Activated CD4-positive, alpha-beta memory T cell treated with anti-CD3 and anti-CD28 coated beads for 36 hours (primary cell): ENCODE measurements at regions of chr5 and their contacts with region 1.

Region 1: DNA sequence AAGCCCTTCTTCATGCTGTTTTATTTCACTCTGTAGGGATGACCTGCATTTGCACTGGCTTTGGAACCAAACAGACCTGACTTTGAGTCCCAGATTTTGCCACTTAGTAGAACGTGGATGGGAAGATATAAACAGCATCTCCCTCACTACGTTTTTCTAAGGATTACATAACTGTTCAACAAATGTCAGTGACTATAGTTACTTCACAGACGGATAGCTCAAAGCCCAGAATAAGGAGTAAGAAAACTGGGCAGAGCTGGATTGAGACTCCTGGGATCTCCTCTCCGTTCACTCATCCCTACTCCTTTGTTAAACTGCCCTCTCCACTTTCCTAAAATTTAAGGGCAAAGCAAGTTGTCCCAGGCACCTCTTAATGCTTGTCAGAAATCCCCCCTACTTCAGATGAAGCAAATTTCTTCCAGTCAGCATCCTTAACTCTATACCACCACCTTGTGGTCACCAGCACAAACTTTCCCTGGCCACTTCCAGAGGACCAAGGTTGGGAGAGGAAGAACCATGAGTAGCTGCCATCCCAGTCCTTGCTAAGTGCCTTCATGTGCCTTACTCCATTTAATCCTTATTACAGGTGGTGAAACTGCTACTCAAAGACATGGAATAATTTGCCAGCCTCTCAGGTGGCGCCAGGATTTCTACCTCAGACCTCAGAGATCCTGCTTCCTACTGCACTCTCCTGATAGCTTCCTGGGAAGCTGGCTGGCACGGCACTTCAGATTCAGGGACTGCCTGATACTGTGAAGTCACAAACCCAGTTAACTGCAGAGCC is 38.4 kb downstream of the EGR1 start:
- DNase-seq: peak; percentile 39
- H3K4me3 Mint-ChIP-seq: no peak overlapping the region
- H3K27ac Mint-ChIP-seq: no peak overlapping the region
- H3K4me1 Mint-ChIP-seq: no peaks in the 10 kb centered on the region
- H3K27me3 Mint-ChIP-seq: no peaks in the 10 kb centered on the region

Region 2: DNA sequence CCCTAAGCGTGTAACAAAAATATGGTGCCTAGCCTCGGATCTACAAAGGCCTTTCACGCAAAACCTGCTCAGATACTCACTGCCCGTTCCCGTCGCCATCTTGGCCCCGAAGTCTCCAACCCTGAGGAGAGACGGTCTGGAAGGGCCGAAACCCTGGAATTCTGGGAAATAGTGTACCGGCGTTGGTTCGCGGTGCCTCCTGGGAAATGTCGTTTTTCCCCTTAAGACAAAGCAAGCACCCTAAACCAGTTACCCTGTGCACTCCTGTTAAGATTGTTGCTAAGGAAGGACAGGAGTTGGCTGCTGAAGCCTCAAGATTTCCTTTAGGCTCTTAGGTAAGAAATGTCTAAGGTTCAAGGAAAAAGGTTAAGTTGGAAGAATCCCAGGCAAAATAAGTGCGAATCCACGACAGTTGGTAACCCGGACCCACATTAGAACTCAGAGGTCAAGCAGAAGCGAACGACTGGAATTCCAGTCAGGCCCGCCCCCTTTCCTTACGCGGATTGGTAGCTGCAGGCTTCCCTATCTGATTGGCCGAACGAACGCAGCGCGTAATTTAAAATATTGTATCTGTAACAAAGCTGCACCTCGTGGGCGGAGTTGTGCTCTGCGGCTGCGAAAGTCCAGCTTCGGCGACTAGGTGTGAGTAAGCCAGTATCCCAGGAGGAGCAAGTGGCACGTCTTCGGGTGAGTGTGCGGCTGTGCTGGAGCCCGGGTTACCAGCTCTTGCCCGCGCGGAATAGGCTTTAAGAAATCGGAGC is 325.0 kb before region 1 on chr5 and contains the starts of genes BRD8 and KIF20A:
- CTCF ChIA-PET with region 1: interaction called, 10 read pairs
- POLR2A ChIA-PET with region 1: no interaction called
- intact Hi-C with region 1: loop called (anchors 1 kb)
- DNase-seq: peak; percentile 96
- H3K4me3 Mint-ChIP-seq: no peak within 1 kb of the TSS
- H3K27ac Mint-ChIP-seq: no peak within 1 kb of the TSS
- H3K4me1 Mint-ChIP-seq: peaks cover 17% of the 10 kb centered on the region
- H3K27me3 Mint-ChIP-seq: no peaks in the 10 kb centered on the region
- total RNA-seq, gene BRD8: 62.9 to 65.8 TPM
- total RNA-seq, gene KIF20A: 55.5 to 60.3 TPM

Region 3: GRCh38 chr5:138438724-138439476 is 64.8 kb before region 1 on chr5 and contains the start of gene REEP2:
- CTCF ChIA-PET with region 1: interaction called, 10 read pairs
- POLR2A ChIA-PET with region 1: no interaction called
- intact Hi-C with region 1: no loop called
- DNase-seq: peak; percentile 80
- H3K4me3 Mint-ChIP-seq: peak within 1 kb of the TSS; percentile 78
- H3K27ac Mint-ChIP-seq: peak within 1 kb of the TSS; percentile 60
- H3K4me1 Mint-ChIP-seq: peaks cover 16% of the 10 kb centered on the region
- H3K27me3 Mint-ChIP-seq: peaks cover 3% of the 10 kb centered on the region
- total RNA-seq, gene REEP2: 6.1 to 10.9 TPM

Region 4: DNA sequence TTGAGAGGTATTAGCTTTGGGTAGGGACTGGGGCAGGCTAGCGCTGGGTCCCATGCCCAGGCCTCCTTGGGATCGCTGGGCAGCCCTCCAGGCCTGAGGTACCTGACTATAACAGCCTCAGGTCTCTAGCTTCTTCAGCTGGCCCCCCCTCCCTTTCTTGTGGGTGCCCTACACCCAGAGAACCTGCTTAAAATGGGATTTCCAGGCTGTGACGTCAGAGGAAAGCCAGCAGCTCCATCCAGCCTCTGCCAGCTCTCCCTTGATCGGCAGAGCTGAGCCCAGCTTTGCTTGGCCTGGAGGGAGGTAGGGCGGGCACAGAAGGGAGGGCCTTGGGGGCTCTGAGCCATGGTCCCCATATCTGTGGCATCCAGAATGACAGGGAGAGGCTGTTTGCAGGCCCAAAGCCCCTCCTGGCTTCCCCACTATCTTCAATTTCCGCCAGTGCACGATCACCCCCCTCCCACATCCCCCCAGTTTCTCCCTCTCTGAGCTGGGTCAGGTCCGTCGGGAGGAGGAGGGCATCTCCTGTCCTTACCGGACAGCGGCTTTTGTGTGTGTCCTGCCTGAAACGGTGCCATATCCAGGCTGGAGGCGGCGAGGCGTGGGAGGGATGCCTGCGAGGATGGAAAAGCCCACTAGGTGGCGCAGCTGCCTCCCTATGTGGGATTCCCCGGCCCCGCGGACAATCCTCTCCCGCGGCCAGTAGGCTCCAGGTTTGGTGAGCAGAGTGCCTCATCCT is 54.0 kb before region 1 on chr5:
- CTCF ChIA-PET with region 1: interaction called, 71 read pairs
- POLR2A ChIA-PET with region 1: no interaction called
- intact Hi-C with region 1: loop called (anchors 1 kb)
- DNase-seq: peak; percentile 92
- H3K4me3 Mint-ChIP-seq: peak overlapping the region; percentile 33
- H3K27ac Mint-ChIP-seq: no peak overlapping the region
- H3K4me1 Mint-ChIP-seq: peaks cover 6% of the 10 kb centered on the region
- H3K27me3 Mint-ChIP-seq: peaks cover 4% of the 10 kb centered on the region

Region 5: GRCh38 chr5:138458384-138458783 is 45.3 kb before region 1 on chr5:
- CTCF ChIA-PET with region 1: interaction called, 71 read pairs
- POLR2A ChIA-PET with region 1: no interaction called
- intact Hi-C with region 1: no loop called
- DNase-seq: no peak
- H3K4me3 Mint-ChIP-seq: no peak overlapping the region
- H3K27ac Mint-ChIP-seq: peak overlapping the region; percentile 99
- H3K4me1 Mint-ChIP-seq: peaks cover 42% of the 10 kb centered on the region
- H3K27me3 Mint-ChIP-seq: no peaks in the 10 kb centered on the region